Naive thymus-derived CD4-positive, alpha-beta T cell (primary cell): ENCODE measurements at regions of chr3 and their contacts with region 1.

Region 1: GRCh38 chr3:133573054-133573628 is 345 bp upstream of the CDV3 start:
- DNase-seq: peak; percentile 99 to 100 (median 100)
- ATAC-seq: peak; percentile 90
- H3K4me3 ChIP-seq: peak overlapping the region; percentile 59
- H3K4me3 Mint-ChIP-seq: peak overlapping the region; percentile 74 to 99 (median 89)
- H3K27ac ChIP-seq: peak overlapping the region; percentile 90
- H3K27ac Mint-ChIP-seq: peak overlapping the region; percentile 91 to 100 (median 98)
- H3K4me1 ChIP-seq: peaks cover 29 to 38% of the 10 kb centered on the region in 2 donors
- H3K4me1 Mint-ChIP-seq: peaks cover 26 to 67% (median 53%) of the 10 kb centered on the region in 7 donors
- H3K27me3 ChIP-seq: no peaks in the 10 kb centered on the region
- H3K27me3 Mint-ChIP-seq: no peaks in the 10 kb centered on the region

Region 2: DNA sequence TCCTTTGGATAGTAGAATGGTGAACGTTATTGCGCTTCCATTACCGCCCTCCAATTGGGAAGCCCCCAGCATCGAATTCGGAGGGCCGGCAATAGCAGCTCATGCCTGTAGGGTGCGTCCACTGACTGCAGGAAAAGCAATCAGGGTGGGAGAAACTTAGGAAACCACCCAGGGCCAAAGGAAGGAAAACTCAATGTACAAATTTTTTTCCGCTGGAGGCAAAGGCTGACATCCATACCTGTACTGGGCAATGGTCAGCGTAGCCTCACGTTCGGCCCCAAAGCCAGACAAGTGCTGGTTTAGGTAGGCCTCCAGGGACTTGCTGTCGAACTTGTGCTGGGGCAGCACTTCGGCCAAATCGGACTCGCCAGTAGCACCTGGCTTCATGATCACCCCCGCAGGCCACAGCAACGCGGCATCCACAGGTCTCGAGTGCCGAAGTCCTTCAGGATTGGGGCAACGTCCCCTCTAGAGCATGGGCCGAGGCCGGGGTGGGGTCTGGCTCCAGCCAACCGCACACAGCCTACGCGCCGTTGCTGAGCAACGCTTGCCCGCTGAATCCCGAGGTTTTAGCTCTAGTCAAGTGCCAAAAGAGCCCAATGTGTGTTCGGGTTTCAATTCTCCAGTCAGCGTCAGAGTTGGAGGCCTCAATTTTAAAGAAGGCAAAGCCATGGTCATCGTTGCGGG is 913.6 kb before region 1 on chr3 and contains the start of gene ACAD11:
- CTCF ChIA-PET with region 1: no interaction called
- POLR2A ChIA-PET with region 1: interaction called, 5 read pairs
- intact Hi-C with region 1: loop called (anchors 1 to 5 kb)
- DNase-seq: peak in 7 of 9 donors; percentile 2 to 55 (median 18)
- ATAC-seq: peak; percentile 54
- H3K4me3 ChIP-seq: peak within 1 kb of the TSS; percentile 99
- H3K4me3 Mint-ChIP-seq: peak within 1 kb of the TSS; percentile 84 to 98 (median 97)
- H3K27ac ChIP-seq: peak within 1 kb of the TSS; percentile 92
- H3K27ac Mint-ChIP-seq: peak within 1 kb of the TSS; percentile 95 to 98 (median 96)
- H3K4me1 ChIP-seq: peaks cover 9 to 19% of the 10 kb centered on the region in 2 donors
- H3K4me1 Mint-ChIP-seq: peaks cover 42 to 78% (median 67%) of the 10 kb centered on the region in 7 donors
- H3K27me3 ChIP-seq: no peaks in the 10 kb centered on the region
- H3K27me3 Mint-ChIP-seq: no peaks in the 10 kb centered on the region
- total RNA-seq, gene ACAD11: 15.0 to 33.7 (median 27.5) TPM

Region 3: GRCh38 chr3:133448478-133449122 is 124.5 kb before region 1 on chr3:
- CTCF ChIA-PET with region 1: no interaction called
- POLR2A ChIA-PET with region 1: interaction called, 3 read pairs
- intact Hi-C with region 1: loop called in 1 of 2 experiments (anchors 5 kb)
- DNase-seq: peak in 1 of 9 donors; percentile 41
- ATAC-seq: peak; percentile 76
- H3K4me3 ChIP-seq: no peak overlapping the region
- H3K4me3 Mint-ChIP-seq: peak overlapping the region in 3 of 10 donors; percentile 31 to 54 (median 36)
- H3K27ac ChIP-seq: no peak overlapping the region
- H3K27ac Mint-ChIP-seq: peak overlapping the region in 8 of 9 donors; percentile 14 to 87 (median 70)
- H3K4me1 ChIP-seq: peaks cover 5 to 14% of the 10 kb centered on the region in 2 donors
- H3K4me1 Mint-ChIP-seq: peaks cover 7 to 26% (median 15%) of the 10 kb centered on the region in 7 donors
- H3K27me3 ChIP-seq: no peaks in the 10 kb centered on the region
- H3K27me3 Mint-ChIP-seq: no peaks in the 10 kb centered on the region

Region 4: GRCh38 chr3:133506215-133506901 is 66.8 kb before region 1 on chr3:
- CTCF ChIA-PET with region 1: no interaction called
- POLR2A ChIA-PET with region 1: interaction called, 28 read pairs
- intact Hi-C with region 1: loop called (anchors 1 kb)
- DNase-seq: peak in 7 of 9 donors; percentile 23 to 60 (median 50)
- ATAC-seq: peak; percentile 93
- H3K4me3 ChIP-seq: peak overlapping the region; percentile 1
- H3K4me3 Mint-ChIP-seq: peak overlapping the region; percentile 71 to 93 (median 82)
- H3K27ac ChIP-seq: peak overlapping the region; percentile 65
- H3K27ac Mint-ChIP-seq: peak overlapping the region; percentile 88 to 97 (median 94)
- H3K4me1 ChIP-seq: no peaks in the 10 kb centered on the region
- H3K4me1 Mint-ChIP-seq: peaks cover 10 to 19% (median 17%) of the 10 kb centered on the region in 7 donors
- H3K27me3 ChIP-seq: no peaks in the 10 kb centered on the region
- H3K27me3 Mint-ChIP-seq: no peaks in the 10 kb centered on the region

Region 5: GRCh38 chr3:133927540-133928066 is 354.5 kb after region 1 on chr3:
- CTCF ChIA-PET with region 1: no interaction called
- POLR2A ChIA-PET with region 1: no interaction called
- intact Hi-C with region 1: loop called in 1 of 2 experiments (anchors 2 kb)
- DNase-seq: peak; percentile 64 to 88 (median 81)
- ATAC-seq: peak; percentile 97
- H3K4me3 ChIP-seq: peak overlapping the region; percentile 51
- H3K4me3 Mint-ChIP-seq: peak overlapping the region; percentile 58 to 85 (median 74)
- H3K27ac ChIP-seq: peak overlapping the region; percentile 43
- H3K27ac Mint-ChIP-seq: peak overlapping the region in 2 of 9 donors; percentile 56 to 69
- H3K4me1 ChIP-seq: peaks cover 0 to 4% of the 10 kb centered on the region in 2 donors
- H3K4me1 Mint-ChIP-seq: peaks cover 4 to 14% (median 5%) of the 10 kb centered on the region in 7 donors
- H3K27me3 ChIP-seq: peaks cover 0 to 3% of the 10 kb centered on the region in 2 donors
- H3K27me3 Mint-ChIP-seq: peaks cover 5 to 26% (median 10%) of the 10 kb centered on the region in 5 donors